ENCODE measurements at regions of chr10 and their contacts with region 1.

Region 1: GRCh38 chr10:17562614-17563013 is 54.6 kb downstream of the HACD1 start:
- DNase-seq: peak; percentile 44 to 58
- ATAC-seq: peak; percentile 96 to 99
- H3K4me3 ChIP-seq: no peak overlapping the region
- H3K27ac ChIP-seq: peak overlapping the region; percentile 62 to 82 (median 72)
- H3K4me1 ChIP-seq: peaks cover 8 to 15% of the 10 kb centered on the region in 2 donors
- H3K27me3 ChIP-seq: no peaks in the 10 kb centered on the region
- CTCF ChIP-seq: no peak
- POLR2A ChIP-seq: no peak

Region 2: GRCh38 chr10:17326377-17326776 is 236.2 kb before region 1 on chr10:
- in situ Hi-C with region 1: no loop called
- intact Hi-C with region 1: no loop called
- DNase-seq: no peak
- ATAC-seq: no peak
- H3K4me3 ChIP-seq: no peak overlapping the region
- H3K27ac ChIP-seq: no peak overlapping the region
- H3K4me1 ChIP-seq: no peaks in the 10 kb centered on the region
- H3K27me3 ChIP-seq: no peaks in the 10 kb centered on the region
- CTCF ChIP-seq: no peak
- POLR2A ChIP-seq: no peak

Region 3: GRCh38 chr10:17454161-17455014 is 108.2 kb before region 1 on chr10 and contains the start of gene ST8SIA6:
- in situ Hi-C with region 1: no loop called
- intact Hi-C with region 1: loop called (anchors 10 kb)
- DNase-seq: peak in 1 of 2 donors; percentile 7
- ATAC-seq: peak in 1 of 2 donors; percentile 64
- H3K4me3 ChIP-seq: peak within 1 kb of the TSS; percentile 39 to 56 (median 48)
- H3K27ac ChIP-seq: peak within 1 kb of the TSS in 1 of 4 donors; percentile 19
- H3K4me1 ChIP-seq: no peaks in the 10 kb centered on the region
- H3K27me3 ChIP-seq: peaks cover 14 to 23% (median 21%) of the 10 kb centered on the region in 3 donors
- CTCF ChIP-seq: no peak
- POLR2A ChIP-seq: no peak
- total RNA-seq, gene ST8SIA6: 0.27 to 0.66 (median 0.44) TPM